ENCODE measurements at regions of chr7 and their contacts with region 1.

Region 1: DNA sequence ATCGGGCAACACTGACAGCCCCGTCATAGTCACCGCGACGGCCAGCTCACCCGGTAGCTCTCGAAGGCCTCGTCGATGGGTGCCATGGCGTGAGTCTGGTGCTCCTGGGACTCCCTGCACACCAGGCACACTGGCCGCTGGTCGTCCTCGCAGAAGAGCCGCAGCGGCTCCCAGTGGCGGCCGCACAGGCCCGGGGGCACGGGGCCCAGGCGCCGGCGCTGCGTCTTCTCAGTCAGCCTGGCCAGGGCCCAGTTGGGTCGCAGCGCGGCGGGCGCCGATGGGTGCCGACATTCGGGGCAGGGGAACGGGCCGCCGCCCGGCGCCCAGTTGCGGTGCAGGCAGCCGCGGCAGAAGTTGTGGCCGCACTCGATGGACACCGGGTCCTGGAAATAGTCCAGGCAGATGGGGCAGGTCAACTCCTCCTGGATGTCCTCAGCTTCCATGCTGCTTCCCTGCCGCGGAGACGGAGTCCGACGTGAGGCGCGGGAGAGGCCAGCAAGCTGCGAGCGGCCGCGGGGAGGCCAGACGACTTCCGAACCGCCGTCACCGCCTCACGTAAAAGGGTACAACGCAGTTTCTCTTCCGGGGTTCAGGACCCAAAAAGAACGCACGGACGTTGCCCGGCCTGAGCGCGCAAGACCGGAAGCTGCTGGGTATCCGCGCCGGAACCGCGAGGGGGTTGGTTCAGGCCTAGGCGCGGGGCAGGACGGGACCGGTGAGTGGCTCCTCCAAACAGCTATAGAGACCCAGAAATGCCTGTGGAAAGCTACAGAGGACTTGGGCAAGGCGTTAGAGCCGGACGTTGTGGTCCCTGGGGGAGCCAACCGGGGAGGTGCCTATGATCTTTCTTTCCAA is at the start of gene TRIM4:
- DNase-seq: peak; percentile 95
- ATAC-seq: peak; percentile 99
- H3K4me3 Mint-ChIP-seq: peak within 1 kb of the TSS; percentile 97
- H3K27ac Mint-ChIP-seq: peak within 1 kb of the TSS; percentile 99
- H3K4me1 Mint-ChIP-seq: peaks cover 44% of the 10 kb centered on the region
- H3K27me3 Mint-ChIP-seq: no peaks in the 10 kb centered on the region
- CTCF ChIP-seq: no peak
- total RNA-seq, gene TRIM4: 22.2 to 22.3 TPM

Region 2: DNA sequence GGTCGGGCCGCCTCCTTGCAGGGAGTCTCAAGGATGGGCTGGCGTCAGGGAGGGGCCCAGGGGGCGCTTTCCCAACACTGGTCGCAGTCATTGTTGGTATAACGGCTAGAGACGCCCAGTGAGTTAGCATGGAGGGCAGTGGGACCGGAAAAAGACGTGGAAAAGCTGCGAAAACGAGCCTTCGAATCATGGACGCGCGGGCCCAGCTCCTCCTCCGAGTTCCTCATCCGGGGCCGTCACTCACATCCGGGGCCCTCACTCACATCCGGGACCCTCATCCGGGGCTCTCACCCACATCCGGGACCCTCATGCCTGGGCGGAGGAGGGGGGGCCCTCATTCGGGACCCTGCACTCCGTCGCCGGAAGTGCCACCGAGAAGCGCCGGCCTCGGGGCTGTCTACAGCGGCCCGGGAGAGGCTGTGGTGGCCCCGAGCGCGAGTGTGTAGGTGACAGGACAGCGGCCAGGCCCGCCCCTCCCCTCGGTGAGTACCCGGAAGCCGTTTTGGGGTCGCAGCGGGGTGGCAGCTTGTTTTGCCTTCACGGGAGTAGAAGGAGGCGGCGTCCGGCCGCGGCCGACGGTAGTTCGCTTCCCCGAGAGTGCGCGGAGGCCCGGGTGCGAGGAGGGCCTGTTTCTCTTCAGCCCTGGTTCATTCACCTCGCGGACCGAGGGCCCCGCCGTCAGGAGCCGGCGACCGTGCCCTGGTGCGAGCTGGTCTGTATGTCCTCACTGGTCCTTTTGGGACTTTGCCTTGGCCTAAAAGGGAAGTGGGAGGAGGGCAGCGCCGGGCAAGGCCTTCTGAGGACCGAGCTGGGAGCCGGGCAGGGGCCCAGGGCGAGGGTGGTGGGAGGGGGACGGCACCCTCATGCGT is 360.6 kb before region 1 on chr7 and contains the start of gene ZNF655:
- CTCF ChIA-PET with region 1: interaction called, 4 read pairs
- POLR2A ChIA-PET with region 1: interaction called, 10 read pairs
- intact Hi-C with region 1: no loop called
- DNase-seq: peak; percentile 96
- ATAC-seq: peak; percentile 85
- H3K4me3 Mint-ChIP-seq: peak within 1 kb of the TSS; percentile 99
- H3K27ac Mint-ChIP-seq: peak within 1 kb of the TSS; percentile 100
- H3K4me1 Mint-ChIP-seq: peaks cover 52% of the 10 kb centered on the region
- H3K27me3 Mint-ChIP-seq: no peaks in the 10 kb centered on the region
- CTCF ChIP-seq: no peak
- total RNA-seq, gene ZNF655: 63.0 to 65.2 TPM

Region 3: GRCh38 chr7:99949638-99950228 is 30.5 kb after region 1 on chr7:
- CTCF ChIA-PET with region 1: interaction called, 14 read pairs
- POLR2A ChIA-PET with region 1: interaction called, 3 read pairs
- intact Hi-C with region 1: no loop called
- DNase-seq: no peak
- ATAC-seq: no peak
- H3K4me3 Mint-ChIP-seq: no peak overlapping the region
- H3K27ac Mint-ChIP-seq: no peak overlapping the region
- H3K4me1 Mint-ChIP-seq: peaks cover 8% of the 10 kb centered on the region
- H3K27me3 Mint-ChIP-seq: peaks cover 3% of the 10 kb centered on the region
- CTCF ChIP-seq: no peak

Region 4: DNA sequence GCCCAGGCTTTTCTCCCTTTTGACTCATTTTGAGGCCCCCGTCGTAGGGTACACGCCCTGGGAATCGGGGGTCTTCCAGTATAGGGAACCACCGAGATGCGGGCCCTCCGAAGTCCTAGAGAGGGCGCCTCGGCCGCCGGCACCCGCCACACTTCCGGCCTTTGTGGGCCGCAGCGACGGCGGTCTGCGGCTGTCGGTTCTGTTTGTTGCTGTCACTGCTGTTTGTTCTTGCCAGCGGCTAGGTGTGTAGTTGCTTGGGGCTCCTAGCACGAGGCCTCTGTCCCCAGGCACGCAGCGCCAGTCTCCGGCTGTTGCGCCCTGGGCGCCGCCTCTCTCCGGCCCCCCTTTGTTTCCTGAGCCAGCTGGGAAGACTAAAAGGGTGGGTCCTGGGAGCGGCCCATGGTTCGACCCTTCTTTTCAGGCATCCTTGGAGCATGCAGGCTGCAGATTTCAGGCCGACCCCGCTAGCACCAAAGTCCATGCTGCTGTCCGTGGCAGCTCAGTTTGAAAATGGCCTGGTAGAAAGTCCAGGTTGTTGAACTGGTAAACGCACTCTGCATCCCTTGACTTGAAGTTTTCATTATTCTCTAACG is 78.5 kb after region 1 on chr7:
- CTCF ChIA-PET with region 1: interaction called, 189 read pairs
- POLR2A ChIA-PET with region 1: interaction called, 3 read pairs
- intact Hi-C with region 1: loop called (anchors 2 kb)
- DNase-seq: peak; percentile 84
- ATAC-seq: peak; percentile 91
- H3K4me3 Mint-ChIP-seq: peak overlapping the region; percentile 75
- H3K27ac Mint-ChIP-seq: peak overlapping the region; percentile 89
- H3K4me1 Mint-ChIP-seq: peaks cover 15% of the 10 kb centered on the region
- H3K27me3 Mint-ChIP-seq: no peaks in the 10 kb centered on the region
- CTCF ChIP-seq: no peak

Region 5: DNA sequence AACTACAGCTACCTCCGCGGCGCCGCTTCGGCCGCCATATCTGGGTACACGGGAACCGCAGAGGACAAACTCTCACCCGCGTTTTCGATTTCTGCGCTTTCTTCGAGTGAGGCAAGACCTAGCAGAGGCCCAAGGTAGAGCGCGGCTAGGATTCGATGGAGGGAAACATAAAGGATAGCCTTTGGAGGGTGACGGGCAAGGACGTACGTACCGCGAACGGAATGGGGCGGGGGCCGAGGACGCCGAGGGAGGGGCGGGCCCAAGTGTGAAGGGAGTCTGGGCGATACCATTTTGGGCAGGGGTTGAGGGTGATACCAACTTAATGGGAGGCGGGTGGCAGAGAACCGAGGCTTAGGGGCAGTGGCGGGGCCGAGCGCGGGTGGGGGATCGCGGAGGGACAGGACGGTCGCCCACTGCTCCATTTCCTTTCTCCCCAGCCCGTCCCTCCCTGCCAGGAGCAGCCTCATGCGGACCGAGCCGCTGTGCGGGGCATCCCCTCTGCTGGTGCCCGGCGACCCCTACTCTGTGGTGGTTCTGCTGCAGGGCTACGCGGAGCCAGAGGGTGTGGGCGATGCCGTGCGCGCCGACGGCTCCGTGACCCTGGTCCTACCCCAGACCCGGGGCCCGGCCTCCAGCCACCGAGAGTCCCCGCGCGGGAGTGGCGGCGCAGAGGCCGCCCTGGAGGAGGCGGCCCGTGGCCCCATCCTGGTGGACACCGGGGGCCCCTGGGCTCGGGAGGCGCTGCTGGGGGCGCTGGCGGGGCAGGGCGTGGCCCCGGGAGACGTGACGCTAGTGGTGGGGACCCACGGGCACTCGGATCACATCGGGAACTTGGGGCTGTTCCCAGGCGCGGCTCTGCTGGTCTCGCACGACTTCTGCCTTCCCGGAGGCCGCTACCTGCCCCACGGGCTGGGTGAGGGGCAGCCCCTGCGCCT is 208.0 kb after region 1 on chr7 and contains the start of gene MBLAC1:
- CTCF ChIA-PET with region 1: interaction called, 9 read pairs
- POLR2A ChIA-PET with region 1: no interaction called
- intact Hi-C with region 1: loop called (anchors 10 kb)
- DNase-seq: peak; percentile 95
- ATAC-seq: peak; percentile 84
- H3K4me3 Mint-ChIP-seq: peak within 1 kb of the TSS; percentile 99
- H3K27ac Mint-ChIP-seq: peak within 1 kb of the TSS; percentile 100
- H3K4me1 Mint-ChIP-seq: peaks cover 24% of the 10 kb centered on the region
- H3K27me3 Mint-ChIP-seq: no peaks in the 10 kb centered on the region
- CTCF ChIP-seq: no peak
- total RNA-seq, gene MBLAC1: 1.9 to 2.1 TPM

Measured in activated CD8-positive, alpha-beta T cell treated with anti-CD3 and anti-CD28 coated beads for 36 hours (primary cell).